MCF 10A (cell line): ENCODE measurements at regions of chr4 and their contacts with region 1.

Region 1: DNA sequence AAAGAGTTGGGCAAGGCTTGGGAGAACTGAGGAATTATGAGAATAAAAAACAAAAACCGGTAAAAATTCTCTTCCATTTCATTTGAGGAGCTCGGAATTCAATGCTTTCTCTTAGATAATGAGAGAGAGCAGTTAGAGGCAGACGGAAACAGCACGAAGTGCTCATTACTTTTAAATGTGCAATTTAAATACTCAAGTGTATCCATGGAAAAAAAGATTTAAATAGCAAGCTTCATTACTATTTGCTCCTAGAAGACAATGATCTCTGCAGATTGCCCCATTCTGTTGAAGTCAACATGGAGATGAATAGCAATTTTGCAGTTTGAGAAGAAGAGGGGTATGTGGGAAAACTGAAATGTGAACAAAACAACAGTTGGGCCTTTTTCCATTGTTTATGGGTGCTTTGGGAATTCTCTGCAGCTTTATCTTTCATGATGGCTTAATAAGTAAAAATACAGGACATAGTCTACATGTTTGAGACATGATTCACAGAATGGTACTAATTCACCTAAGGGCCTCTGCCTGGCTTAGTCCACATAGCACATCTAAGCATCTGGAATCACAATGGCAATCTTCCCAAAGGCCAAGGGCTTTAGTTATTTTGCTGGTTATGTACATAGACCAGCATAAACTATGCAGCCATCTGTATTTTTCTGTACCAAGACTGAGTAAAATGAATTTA is 512.7 kb upstream of the FAT1 start:
- DNase-seq: peak; percentile 47
- H3K4me3 Mint-ChIP-seq: no peak overlapping the region
- H3K27ac Mint-ChIP-seq: no peak overlapping the region
- H3K4me1 Mint-ChIP-seq: peaks cover 10% of the 10 kb centered on the region
- H3K27me3 Mint-ChIP-seq: no peaks in the 10 kb centered on the region
- CTCF ChIP-seq: no peak

Region 2: GRCh38 chr4:186739802-186740434 is 496.4 kb before region 1 on chr4:
- CTCF ChIA-PET with region 1: no interaction called
- POLR2A ChIA-PET with region 1: no interaction called
- intact Hi-C with region 1: no loop called
- DNase-seq: no peak
- H3K4me3 Mint-ChIP-seq: no peak overlapping the region
- H3K27ac Mint-ChIP-seq: no peak overlapping the region
- H3K4me1 Mint-ChIP-seq: peaks cover 6% of the 10 kb centered on the region
- H3K27me3 Mint-ChIP-seq: no peaks in the 10 kb centered on the region
- CTCF ChIP-seq: no peak

Region 3: DNA sequence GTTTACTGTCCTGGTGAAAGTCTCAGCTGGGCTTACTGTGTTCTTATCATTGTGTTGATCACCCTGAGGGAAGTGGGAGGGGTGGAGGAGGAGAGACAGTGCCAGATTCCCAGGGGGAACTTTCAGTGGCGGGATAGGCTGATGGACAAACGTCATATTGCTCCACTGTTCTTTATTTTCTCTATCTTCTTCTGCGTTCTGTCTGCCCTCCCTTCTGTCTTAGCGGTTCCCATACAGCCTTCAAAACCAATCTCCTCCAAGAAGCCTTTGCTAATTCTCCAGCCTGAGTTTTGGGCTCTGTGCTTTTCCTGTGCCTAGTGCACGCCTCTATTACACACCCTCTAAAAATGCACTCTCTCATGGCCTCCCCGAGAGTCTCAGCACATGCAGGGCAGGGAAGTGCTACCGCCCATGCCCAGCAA is 64.0 kb before region 1 on chr4:
- CTCF ChIA-PET with region 1: no interaction called
- POLR2A ChIA-PET with region 1: interaction called, 3 read pairs
- intact Hi-C with region 1: loop called (anchors 2 kb)
- DNase-seq: peak; percentile 61
- H3K4me3 Mint-ChIP-seq: peak overlapping the region; percentile 69
- H3K27ac Mint-ChIP-seq: peak overlapping the region; percentile 75
- H3K4me1 Mint-ChIP-seq: peaks cover 18% of the 10 kb centered on the region
- H3K27me3 Mint-ChIP-seq: no peaks in the 10 kb centered on the region
- CTCF ChIP-seq: no peak